Activated CD4-positive, alpha-beta T cell treated with anti-CD3 and anti-CD28 coated beads for 36 hours (primary cell): ENCODE measurements at regions of chr18 and their contacts with region 1.

Region 1: DNA sequence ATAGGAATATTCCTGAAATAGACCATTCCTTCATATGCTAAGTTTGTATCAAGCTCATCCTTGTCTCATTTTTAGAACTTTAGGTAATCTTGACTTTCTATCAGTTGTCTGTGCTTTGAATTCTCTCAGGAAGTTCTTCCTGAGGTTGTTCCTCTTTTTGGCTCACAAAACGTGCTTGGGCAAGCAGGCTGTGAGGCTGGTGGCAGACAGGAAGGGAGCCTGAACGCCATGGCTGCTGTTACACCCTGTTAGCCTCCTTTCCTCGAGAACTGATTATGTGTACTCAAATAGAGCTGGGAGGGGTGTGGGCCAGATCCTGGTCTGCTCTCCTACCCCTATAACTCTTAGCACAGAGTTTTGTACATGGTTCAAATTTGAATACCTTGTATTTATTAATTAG is 136.4 kb upstream of the CELF4 start:
- DNase-seq: no peak
- ATAC-seq: no peak
- H3K4me3 Mint-ChIP-seq: no peak overlapping the region
- H3K27ac Mint-ChIP-seq: no peak overlapping the region
- H3K4me1 Mint-ChIP-seq: no peaks in the 10 kb centered on the region
- H3K27me3 Mint-ChIP-seq: no peaks in the 10 kb centered on the region

Region 2: DNA sequence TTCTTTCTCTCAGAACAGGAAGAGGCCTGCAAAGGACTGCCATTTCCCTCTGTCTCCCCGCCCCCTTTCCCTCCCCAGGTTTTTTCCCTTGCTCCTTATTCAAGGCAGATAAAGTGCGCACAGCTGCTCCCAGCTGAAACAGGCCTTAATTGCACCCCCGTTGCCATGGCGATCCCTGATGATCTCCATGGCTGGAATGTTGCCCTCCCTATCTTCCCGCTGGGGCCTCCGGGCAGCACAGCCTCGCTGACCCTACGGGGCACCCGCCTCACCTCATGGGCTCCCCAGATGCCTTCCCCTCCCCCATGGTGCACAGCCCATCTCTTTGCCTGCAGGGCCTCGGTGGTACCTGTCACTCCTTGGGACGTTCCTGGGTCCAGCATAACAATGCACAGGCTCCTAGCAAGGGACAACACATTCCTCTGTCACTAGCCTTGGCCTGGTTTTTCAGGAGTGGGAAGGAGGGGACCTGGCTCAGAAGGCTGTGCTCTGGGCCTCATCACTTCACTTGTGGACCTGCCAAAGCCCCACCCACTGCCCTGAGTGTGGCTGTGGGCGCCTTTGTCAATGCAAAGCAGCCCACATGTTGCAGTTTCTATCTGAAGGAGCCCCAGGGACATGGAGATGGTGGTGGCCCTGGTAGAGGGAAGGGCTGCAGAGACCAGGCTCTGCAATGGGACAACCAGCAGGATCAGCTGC is 251.4 kb before region 1 on chr18:
- CTCF ChIA-PET with region 1: no interaction called
- POLR2A ChIA-PET with region 1: no interaction called
- intact Hi-C with region 1: no loop called
- DNase-seq: no peak
- ATAC-seq: no peak
- H3K4me3 Mint-ChIP-seq: no peak overlapping the region
- H3K27ac Mint-ChIP-seq: no peak overlapping the region
- H3K4me1 Mint-ChIP-seq: no peaks in the 10 kb centered on the region
- H3K27me3 Mint-ChIP-seq: no peaks in the 10 kb centered on the region

Region 3: DNA sequence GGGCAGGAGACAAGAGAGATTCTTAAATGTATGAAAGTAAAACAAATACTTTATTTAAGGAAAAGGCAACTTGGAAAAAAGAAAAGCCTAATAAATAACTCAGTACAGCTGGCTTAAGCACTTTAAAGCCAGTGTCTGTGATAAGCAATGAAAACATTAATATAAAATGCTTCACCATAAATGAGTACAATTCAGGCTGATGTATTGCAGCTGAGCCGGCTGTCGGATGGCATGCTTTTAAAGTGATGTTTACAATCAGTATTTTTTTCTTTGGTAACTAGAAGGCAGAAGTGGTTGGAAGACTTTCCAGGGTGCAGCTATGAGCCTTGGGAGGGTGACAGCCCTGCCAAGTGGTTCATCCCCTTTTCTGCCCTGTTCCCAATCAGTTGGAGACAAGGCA is 77.6 kb before region 1 on chr18:
- CTCF ChIA-PET with region 1: no interaction called
- POLR2A ChIA-PET with region 1: no interaction called
- intact Hi-C with region 1: no loop called
- DNase-seq: no peak
- ATAC-seq: no peak
- H3K4me3 Mint-ChIP-seq: no peak overlapping the region
- H3K27ac Mint-ChIP-seq: no peak overlapping the region
- H3K4me1 Mint-ChIP-seq: no peaks in the 10 kb centered on the region
- H3K27me3 Mint-ChIP-seq: no peaks in the 10 kb centered on the region

Region 4: GRCh38 chr18:37659906-37660305 is 42.1 kb before region 1 on chr18:
- CTCF ChIA-PET with region 1: no interaction called
- POLR2A ChIA-PET with region 1: no interaction called
- intact Hi-C with region 1: loop called in 1 of 2 experiments (anchors 5 kb)
- DNase-seq: no peak
- ATAC-seq: no peak
- H3K4me3 Mint-ChIP-seq: no peak overlapping the region
- H3K27ac Mint-ChIP-seq: no peak overlapping the region
- H3K4me1 Mint-ChIP-seq: no peaks in the 10 kb centered on the region
- H3K27me3 Mint-ChIP-seq: no peaks in the 10 kb centered on the region

Region 5: GRCh38 chr18:37721544-37722522 is 19.9 kb after region 1 on chr18:
- CTCF ChIA-PET with region 1: no interaction called
- POLR2A ChIA-PET with region 1: no interaction called
- intact Hi-C with region 1: no loop called
- DNase-seq: no peak
- ATAC-seq: no peak
- H3K4me3 Mint-ChIP-seq: no peak overlapping the region
- H3K27ac Mint-ChIP-seq: no peak overlapping the region
- H3K4me1 Mint-ChIP-seq: no peaks in the 10 kb centered on the region
- H3K27me3 Mint-ChIP-seq: no peaks in the 10 kb centered on the region

Region 6: DNA sequence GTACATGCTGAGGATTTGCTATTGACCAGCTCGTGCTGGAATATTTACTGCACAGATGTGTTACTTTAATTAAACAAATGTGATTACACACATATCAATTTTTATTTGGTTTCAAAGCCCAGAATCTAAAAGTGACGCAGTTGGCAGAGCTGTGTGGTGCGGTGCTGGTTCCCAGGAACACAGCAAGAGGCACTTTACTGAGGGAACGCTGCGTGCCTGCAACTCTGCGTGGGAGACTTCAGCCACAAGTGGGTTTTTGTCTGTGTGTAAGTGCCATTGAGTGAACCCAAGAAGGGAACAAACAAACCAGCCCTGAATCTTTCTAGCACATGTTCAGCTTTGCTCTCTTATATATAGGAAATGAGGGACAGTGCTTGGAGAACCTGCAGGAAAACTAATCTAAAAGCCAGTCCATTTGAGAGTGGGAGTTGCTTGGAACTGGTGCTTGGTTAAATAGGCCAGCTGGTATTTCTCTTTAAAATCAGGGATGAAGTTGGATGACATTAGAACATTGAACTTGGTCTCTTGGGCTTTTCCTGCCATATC is 60.2 kb after region 1 on chr18:
- CTCF ChIA-PET with region 1: no interaction called
- POLR2A ChIA-PET with region 1: no interaction called
- intact Hi-C with region 1: loop called in 1 of 2 experiments (anchors 10 kb)
- DNase-seq: no peak
- ATAC-seq: no peak
- H3K4me3 Mint-ChIP-seq: no peak overlapping the region
- H3K27ac Mint-ChIP-seq: no peak overlapping the region
- H3K4me1 Mint-ChIP-seq: no peaks in the 10 kb centered on the region
- H3K27me3 Mint-ChIP-seq: no peaks in the 10 kb centered on the region